Heart left ventricle (tissue), 16 donors: ENCODE measurements at regions of chr6 and their contacts with region 1.

Region 1: DNA sequence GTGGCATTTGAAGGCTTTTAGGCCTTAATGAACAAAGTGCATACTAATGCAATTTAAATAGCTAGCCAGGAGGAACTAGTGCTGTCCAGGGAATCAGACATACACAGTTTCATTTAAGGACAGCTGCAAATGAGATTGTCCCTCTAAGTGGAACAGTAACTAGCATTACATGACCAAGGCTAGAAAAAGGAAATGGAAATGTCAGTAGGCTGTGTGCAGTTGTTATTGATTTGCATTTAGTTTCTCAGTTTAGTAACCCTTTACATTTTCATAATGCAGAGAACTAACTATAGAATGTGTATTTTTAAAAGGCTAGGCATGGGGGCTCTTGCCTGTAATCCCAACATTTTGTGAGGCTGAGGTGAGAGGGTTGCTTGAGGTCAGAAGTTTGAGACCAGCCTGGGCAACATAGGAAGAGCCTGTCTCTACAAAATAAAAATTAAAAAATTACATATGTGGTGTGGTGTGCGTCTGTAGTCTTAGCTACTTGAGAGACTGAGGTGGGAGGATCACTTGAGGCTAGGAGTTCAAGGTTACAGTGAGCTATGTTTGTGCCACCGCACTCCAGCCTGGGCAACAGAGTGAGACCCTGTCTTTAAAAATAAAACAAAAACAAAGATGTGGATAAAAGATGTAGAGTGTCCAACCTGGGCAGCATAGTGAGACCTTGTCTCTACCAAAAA is 468.0 kb downstream of the UTRN start:
- DNase-seq: no peak
- ATAC-seq: no peak
- H3K4me3 ChIP-seq: no peak overlapping the region
- H3K27ac ChIP-seq: no peak overlapping the region
- H3K4me1 ChIP-seq: peaks cover 0 to 6% (median 0%) of the 10 kb centered on the region in 12 donors
- H3K27me3 ChIP-seq: no peaks in the 10 kb centered on the region
- CTCF ChIP-seq: no peak
- POLR2A ChIP-seq: no peak

Region 2: GRCh38 chr6:144769142-144769541 is 16.0 kb after region 1 on chr6:
- intact Hi-C with region 1: loop called in 1 of 10 experiments (anchors 2 kb)
- DNase-seq: no peak
- ATAC-seq: peak in 1 of 4 donors; percentile 66
- H3K4me3 ChIP-seq: no peak overlapping the region
- H3K27ac ChIP-seq: peak overlapping the region in 4 of 12 donors; percentile 3 to 39 (median 24)
- H3K4me1 ChIP-seq: peaks cover 0 to 30% (median 11%) of the 10 kb centered on the region in 12 donors
- H3K27me3 ChIP-seq: no peaks in the 10 kb centered on the region
- CTCF ChIP-seq: no peak
- POLR2A ChIP-seq: no peak

Region 3: GRCh38 chr6:144853603-144854002 is 100.4 kb after region 1 on chr6:
- intact Hi-C with region 1: no loop called
- DNase-seq: no peak
- ATAC-seq: no peak
- H3K4me3 ChIP-seq: no peak overlapping the region
- H3K27ac ChIP-seq: no peak overlapping the region
- H3K4me1 ChIP-seq: peaks cover 0 to 3% (median 0%) of the 10 kb centered on the region in 12 donors
- H3K27me3 ChIP-seq: no peaks in the 10 kb centered on the region
- CTCF ChIP-seq: no peak
- POLR2A ChIP-seq: no peak